Left cardiac atrium (tissue), 4 donors: ENCODE measurements at regions of chr12 and their contacts with region 1.

Region 1: DNA sequence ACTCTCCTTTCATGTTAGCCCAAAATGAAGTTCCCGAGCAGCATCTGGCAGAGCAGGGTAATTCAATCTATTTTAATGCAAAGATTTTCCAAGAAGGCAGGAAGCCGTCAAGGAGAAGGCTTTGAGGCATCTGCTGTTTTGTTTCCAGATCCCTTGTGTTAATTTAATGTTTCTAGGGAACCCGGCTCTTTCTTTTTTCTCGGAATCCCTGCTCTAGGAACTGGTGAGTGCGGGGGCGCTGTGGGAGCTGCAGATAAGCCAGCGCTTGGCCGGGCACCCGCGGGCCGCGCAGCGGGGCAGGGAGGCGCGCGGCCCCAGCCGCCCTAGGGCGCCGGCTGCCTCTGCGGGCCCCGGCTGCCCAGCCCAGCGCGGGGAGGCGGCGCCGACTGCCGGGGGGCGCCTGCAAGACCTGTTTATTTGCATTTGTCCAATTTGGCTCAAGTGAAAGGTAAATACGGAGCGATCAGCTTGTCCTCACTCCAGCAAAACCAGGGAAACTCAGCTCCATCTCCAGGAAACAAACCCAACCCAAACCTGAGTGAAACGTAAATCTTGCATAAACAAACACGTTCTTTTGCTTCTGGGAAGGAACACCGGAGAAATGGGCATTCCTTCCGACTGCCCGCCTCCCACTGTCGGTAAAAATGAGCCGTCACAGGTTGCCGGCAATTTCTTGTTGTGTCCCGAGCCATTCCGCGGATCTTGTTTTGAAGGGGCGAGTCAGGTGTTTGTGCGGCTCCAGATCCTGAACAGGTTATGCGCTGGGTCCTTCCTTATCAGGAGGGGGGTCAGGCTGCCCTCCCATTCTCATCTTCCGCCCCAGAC is 65.1 kb downstream of the CRADD start:
- DNase-seq: peak; percentile 81
- ATAC-seq: peak; percentile 97

Region 2: GRCh38 chr12:93595351-93595750 is 147.0 kb before region 1 on chr12:
- intact Hi-C with region 1: loop called in 1 of 2 experiments (anchors 5 kb)
- DNase-seq: no peak
- ATAC-seq: no peak

Region 3: GRCh38 chr12:93638095-93638494 is 104.2 kb before region 1 on chr12:
- intact Hi-C with region 1: no loop called
- DNase-seq: no peak
- ATAC-seq: no peak

Region 4: GRCh38 chr12:93677195-93678064 is 64.9 kb before region 1 on chr12 and contains the start of gene CRADD:
- intact Hi-C with region 1: loop called (anchors 5 to 10 kb)
- DNase-seq: peak; percentile 77
- ATAC-seq: peak; percentile 95 to 97
- total RNA-seq, gene CRADD: 33.8 to 33.9 TPM

Region 5: GRCh38 chr12:93689076-93689834 is 53.1 kb before region 1 on chr12:
- intact Hi-C with region 1: no loop called
- DNase-seq: no peak
- ATAC-seq: no peak